Transverse colon (tissue), 4 donors: ENCODE measurements at regions of chr1 and their contacts with region 1.

Region 1: GRCh38 chr1:26145041-26145959 is 13.6 kb upstream of the FAM110D start:
- DNase-seq: peak; percentile 87
- H3K4me3 ChIP-seq: no peak overlapping the region
- H3K27ac ChIP-seq: no peak overlapping the region
- H3K4me1 ChIP-seq: no peaks in the 10 kb centered on the region
- H3K27me3 ChIP-seq: no peaks in the 10 kb centered on the region
- CTCF ChIP-seq: peak; percentile 77 to 87 (median 79)
- EP300 ChIP-seq: no peak
- POLR2A ChIP-seq: no peak

Region 2: DNA sequence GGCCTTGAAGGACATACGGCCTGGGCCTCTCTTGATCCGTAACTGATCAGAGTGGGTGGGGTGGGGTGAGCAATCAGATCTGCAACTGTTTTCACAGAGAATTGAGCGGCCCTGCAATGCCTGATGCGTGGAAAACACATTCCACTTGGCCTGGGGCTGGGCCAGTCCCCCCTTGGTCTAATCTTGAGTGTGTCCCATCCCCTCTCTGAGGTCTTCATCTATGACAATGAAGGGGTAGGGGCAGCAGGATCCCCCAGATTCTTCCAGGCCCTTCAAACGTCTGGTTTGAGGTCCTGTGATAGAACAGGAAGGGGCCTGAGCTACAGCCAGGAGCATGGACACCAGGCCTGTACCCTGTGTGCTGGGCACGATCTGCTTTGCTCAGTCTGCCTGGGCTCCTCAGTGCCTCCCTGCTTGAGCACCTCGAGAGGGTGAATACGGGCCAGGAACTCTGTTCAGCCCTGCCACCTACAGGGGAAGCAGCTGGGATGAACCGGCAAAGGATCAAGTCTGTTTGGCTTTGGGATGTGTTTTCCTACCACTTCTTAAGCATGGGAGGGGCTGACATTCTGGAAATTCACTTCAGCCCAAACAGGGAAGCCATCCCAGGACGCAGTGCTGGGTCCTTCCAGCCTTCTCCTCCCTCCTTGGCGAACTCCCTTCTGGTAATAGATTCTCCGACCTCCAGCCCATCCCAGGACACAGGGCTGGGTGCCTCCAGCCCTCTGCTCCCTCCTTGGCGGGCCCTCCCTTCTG is 401.3 kb before region 1 on chr1:
- in situ Hi-C with region 1: no loop called
- intact Hi-C with region 1: no loop called
- DNase-seq: peak; percentile 61
- H3K4me3 ChIP-seq: no peak overlapping the region
- H3K27ac ChIP-seq: peak overlapping the region; percentile 80 to 91 (median 84)
- H3K4me1 ChIP-seq: peaks cover 13 to 28% (median 18%) of the 10 kb centered on the region in 4 donors
- H3K27me3 ChIP-seq: no peaks in the 10 kb centered on the region
- CTCF ChIP-seq: peak; percentile 37 to 55 (median 43)
- EP300 ChIP-seq: no peak
- POLR2A ChIP-seq: no peak

Region 3: DNA sequence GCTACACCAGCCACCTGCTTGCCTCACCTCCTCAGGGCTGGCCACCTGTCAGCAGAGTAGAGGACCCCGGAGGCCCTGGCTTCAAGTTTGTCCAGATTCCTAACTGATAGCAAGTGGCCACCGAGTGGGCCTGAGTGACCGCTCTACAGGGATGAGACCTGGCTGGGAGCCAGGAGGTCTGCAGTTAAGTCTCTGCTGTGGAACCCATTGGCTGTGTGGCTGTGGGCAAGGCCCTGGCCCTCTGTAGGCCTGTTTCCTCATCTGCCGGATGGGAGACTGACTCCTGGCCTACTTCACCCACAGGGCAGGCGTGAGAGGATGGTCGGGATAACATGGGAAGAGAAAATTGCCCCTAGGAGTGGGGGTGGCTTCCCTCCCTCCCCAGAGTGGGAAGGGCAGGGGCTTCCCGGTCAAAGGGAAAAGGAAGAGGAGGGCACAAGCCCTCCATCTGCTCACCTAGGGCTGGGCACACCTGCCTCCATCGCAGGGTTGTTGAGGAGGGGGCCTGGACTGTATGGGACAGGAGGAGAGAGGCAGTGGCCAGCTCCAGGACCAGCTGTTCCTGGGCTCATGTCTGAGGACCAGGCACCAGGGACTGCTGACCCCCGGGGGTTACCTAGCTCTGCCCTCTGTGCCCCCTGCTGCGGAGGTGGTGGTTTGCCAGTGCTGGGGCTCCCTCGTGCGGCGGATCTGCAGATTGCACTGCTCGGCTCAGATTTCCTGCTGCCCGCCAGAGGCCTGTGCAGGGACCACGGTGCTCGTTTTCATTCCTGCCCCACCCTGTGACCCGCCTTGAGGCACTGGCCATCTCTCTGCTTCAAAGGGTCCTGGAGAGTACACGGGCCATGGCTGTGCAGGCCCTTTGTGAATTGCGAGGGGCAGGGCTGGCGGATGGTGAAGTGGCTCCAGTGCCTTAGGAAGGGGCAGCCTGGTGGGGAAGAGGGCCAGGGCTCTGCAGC is 334.7 kb before region 1 on chr1:
- in situ Hi-C with region 1: no loop called
- intact Hi-C with region 1: no loop called
- DNase-seq: peak; percentile 79
- H3K4me3 ChIP-seq: no peak overlapping the region
- H3K27ac ChIP-seq: no peak overlapping the region
- H3K4me1 ChIP-seq: peaks cover 0 to 13% (median 3%) of the 10 kb centered on the region in 4 donors
- H3K27me3 ChIP-seq: no peaks in the 10 kb centered on the region
- CTCF ChIP-seq: peak; percentile 91 to 95 (median 92)
- EP300 ChIP-seq: no peak
- POLR2A ChIP-seq: no peak

Region 4: GRCh38 chr1:25952841-25953401 is 192.4 kb before region 1 on chr1:
- in situ Hi-C with region 1: no loop called
- intact Hi-C with region 1: no loop called
- DNase-seq: no peak
- H3K4me3 ChIP-seq: no peak overlapping the region
- H3K27ac ChIP-seq: peak overlapping the region in 1 of 4 donors; percentile 30
- H3K4me1 ChIP-seq: peaks cover 0 to 9% (median 0%) of the 10 kb centered on the region in 4 donors
- H3K27me3 ChIP-seq: no peaks in the 10 kb centered on the region
- CTCF ChIP-seq: no peak
- EP300 ChIP-seq: no peak
- POLR2A ChIP-seq: no peak

Region 5: GRCh38 chr1:26035959-26036755 is 109.1 kb before region 1 on chr1:
- in situ Hi-C with region 1: loop called (anchors 10 to 25 kb)
- intact Hi-C with region 1: loop called (anchors 10 kb)
- DNase-seq: peak; percentile 86
- H3K4me3 ChIP-seq: peak overlapping the region; percentile 47 to 86 (median 58)
- H3K27ac ChIP-seq: peak overlapping the region; percentile 80 to 87 (median 86)
- H3K4me1 ChIP-seq: peaks cover 3 to 15% (median 10%) of the 10 kb centered on the region in 4 donors
- H3K27me3 ChIP-seq: peaks cover 6% of the 10 kb centered on the region
- CTCF ChIP-seq: peak; percentile 99 to 100 (median 100)
- EP300 ChIP-seq: no peak
- POLR2A ChIP-seq: no peak

Region 6: GRCh38 chr1:26045722-26046248 is 99.5 kb before region 1 on chr1 and contains the start of gene SLC30A2:
- in situ Hi-C with region 1: loop called (anchors 10 to 25 kb)
- intact Hi-C with region 1: no loop called
- DNase-seq: no peak
- H3K4me3 ChIP-seq: peak within 1 kb of the TSS in 2 of 4 donors; percentile 18 to 30
- H3K27ac ChIP-seq: no peak within 1 kb of the TSS
- H3K4me1 ChIP-seq: peaks cover 0 to 31% (median 15%) of the 10 kb centered on the region in 4 donors
- H3K27me3 ChIP-seq: peaks cover 69% of the 10 kb centered on the region
- CTCF ChIP-seq: no peak
- EP300 ChIP-seq: no peak
- POLR2A ChIP-seq: no peak
- total RNA-seq, gene SLC30A2: 0.14 TPM in 1 of 4 donors, not detected in the others

Region 7: GRCh38 chr1:26083246-26083645 is 62.1 kb before region 1 on chr1:
- in situ Hi-C with region 1: no loop called
- intact Hi-C with region 1: no loop called
- DNase-seq: no peak
- H3K4me3 ChIP-seq: no peak overlapping the region
- H3K27ac ChIP-seq: no peak overlapping the region
- H3K4me1 ChIP-seq: peaks cover 0 to 4% (median 3%) of the 10 kb centered on the region in 4 donors
- H3K27me3 ChIP-seq: peaks cover 21% of the 10 kb centered on the region
- CTCF ChIP-seq: no peak
- EP300 ChIP-seq: no peak
- POLR2A ChIP-seq: no peak

Region 8: GRCh38 chr1:26097696-26098095 is 47.6 kb before region 1 on chr1:
- in situ Hi-C with region 1: loop called in 1 of 4 experiments (anchors 5 kb)
- intact Hi-C with region 1: no loop called
- DNase-seq: no peak
- H3K4me3 ChIP-seq: no peak overlapping the region
- H3K27ac ChIP-seq: no peak overlapping the region
- H3K4me1 ChIP-seq: no peaks in the 10 kb centered on the region
- H3K27me3 ChIP-seq: peaks cover 16% of the 10 kb centered on the region
- CTCF ChIP-seq: no peak
- EP300 ChIP-seq: no peak
- POLR2A ChIP-seq: no peak

Region 9: GRCh38 chr1:26109229-26110164 is 35.8 kb before region 1 on chr1:
- in situ Hi-C with region 1: loop called (anchors 5 kb)
- intact Hi-C with region 1: loop called (anchors 1 kb)
- DNase-seq: no peak
- H3K4me3 ChIP-seq: peak overlapping the region in 1 of 4 donors; percentile 100
- H3K27ac ChIP-seq: peak overlapping the region in 2 of 4 donors; percentile 97
- H3K4me1 ChIP-seq: peaks cover 11 to 36% (median 26%) of the 10 kb centered on the region in 4 donors
- H3K27me3 ChIP-seq: no peaks in the 10 kb centered on the region
- CTCF ChIP-seq: no peak
- EP300 ChIP-seq: no peak
- POLR2A ChIP-seq: no peak